Cardiac septum (tissue), 1 donor: ENCODE measurements at regions of chrX and their contacts with region 1.

Region 1: DNA sequence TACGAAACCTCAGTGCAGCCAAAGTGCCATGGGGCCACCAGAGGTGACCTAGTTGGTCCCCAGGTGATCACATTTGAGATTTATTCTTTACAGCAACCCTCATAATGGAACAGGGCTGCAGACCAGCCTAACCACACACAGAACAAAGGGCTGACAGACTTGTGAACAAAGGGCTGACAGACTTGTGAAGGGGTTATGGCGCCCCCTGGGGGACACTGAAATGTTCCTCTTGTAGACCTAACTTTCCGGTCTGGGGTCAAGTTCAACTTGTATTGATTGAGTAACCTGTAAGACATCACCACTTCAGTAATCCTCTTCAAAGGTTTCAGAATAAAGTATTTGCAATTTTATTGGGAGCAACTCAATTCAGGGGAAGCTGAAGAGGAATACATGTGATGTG is 175.9 kb upstream of the RPS6KA3 start:
- DNase-seq: peak; percentile 86

Region 2: GRCh38 chrX:20141281-20142220 is 301.0 kb before region 1 on chrX and contains the start of gene EIF1AX:
- intact Hi-C with region 1: loop called (anchors 5 kb)
- DNase-seq: peak; percentile 100
- total RNA-seq, gene EIF1AX: 75.4 TPM

Region 3: GRCh38 chrX:20252381-20253231 is 190.0 kb before region 1 on chrX:
- intact Hi-C with region 1: loop called (anchors 10 kb)
- DNase-seq: no peak